ENCODE measurements at regions of chr15 and their contacts with region 1.

Region 1: DNA sequence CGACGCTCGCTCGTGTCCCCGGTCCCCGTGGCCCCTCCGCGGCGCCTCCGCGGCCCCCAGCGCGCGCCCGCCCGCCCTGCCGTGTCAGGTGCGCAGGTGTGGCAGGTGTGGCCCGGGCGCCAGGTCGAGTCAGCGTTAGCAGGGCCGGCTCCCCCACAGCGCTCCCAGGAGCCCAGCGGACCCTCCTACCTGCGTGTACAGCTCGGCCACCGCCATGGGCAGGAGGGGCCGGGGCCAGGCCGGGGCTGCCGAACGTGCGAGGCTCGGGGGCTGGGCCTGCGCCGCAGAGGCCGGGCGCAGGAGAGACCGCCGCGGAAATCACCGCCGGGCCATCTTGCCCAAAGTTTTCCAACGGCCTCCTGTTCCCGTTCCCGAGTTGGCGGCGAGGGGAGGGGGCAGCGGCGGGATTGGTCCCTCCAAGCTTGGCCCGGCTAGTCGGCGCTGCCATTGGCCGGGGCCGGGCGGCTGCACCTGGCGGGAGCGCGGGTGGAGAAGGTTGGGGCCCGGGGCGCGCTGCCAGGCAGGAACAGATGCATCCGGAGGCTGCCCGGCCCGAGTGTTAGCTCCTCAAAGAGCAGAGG is at the start of gene MYO5C:
- DNase-seq: peak; percentile 93
- H3K4me3 Mint-ChIP-seq: peak within 1 kb of the TSS; percentile 69
- H3K27ac Mint-ChIP-seq: peak within 1 kb of the TSS; percentile 54
- H3K4me1 Mint-ChIP-seq: peaks cover 25% of the 10 kb centered on the region
- H3K27me3 Mint-ChIP-seq: no peaks in the 10 kb centered on the region
- CTCF ChIP-seq: no peak
- total RNA-seq, gene MYO5C: 48.1 and 48.4 TPM in 2 replicates

Region 2: DNA sequence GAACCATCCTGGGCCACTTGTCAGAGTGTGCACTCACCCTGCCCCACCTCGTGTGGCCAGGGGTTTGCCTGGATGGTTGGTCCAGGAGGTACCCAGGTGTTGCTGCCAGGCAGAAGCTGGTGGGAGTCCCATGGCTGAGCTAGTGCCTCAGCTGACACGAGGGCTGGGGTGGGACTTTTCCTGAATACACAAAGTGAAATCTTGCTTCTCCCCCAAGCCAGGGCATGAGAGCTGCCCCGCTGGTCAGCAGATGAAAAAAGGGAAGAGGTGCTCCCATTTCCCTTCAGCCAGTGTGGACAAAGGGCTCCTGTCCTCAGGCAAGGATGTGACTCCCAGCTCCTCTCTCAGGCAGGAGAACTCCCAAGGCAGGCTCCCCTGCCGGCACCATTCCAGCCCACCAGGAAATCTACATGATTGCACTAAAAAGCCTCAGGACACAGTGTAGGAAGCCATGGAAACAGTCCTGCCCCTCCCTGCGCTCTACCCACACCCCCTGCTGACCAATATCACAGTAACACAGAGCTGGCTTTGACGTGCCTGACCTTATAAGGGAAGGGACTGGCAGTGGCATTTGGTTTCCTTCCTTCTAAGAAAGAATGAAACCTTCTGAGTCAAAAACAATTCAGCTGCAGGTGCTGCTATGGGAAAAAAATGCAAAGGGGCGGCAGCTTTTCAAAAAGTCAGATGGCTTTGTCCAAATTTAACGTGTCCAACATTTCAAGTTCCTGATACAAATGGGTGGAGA is 33.8 kb before region 1 on chr15:
- CTCF ChIA-PET with region 1: interaction called, 4 read pairs
- intact Hi-C with region 1: loop called (anchors 2 kb)
- DNase-seq: peak; percentile 87
- H3K4me3 Mint-ChIP-seq: peak overlapping the region; percentile 40
- H3K27ac Mint-ChIP-seq: peak overlapping the region; percentile 99
- H3K4me1 Mint-ChIP-seq: peaks cover 28% of the 10 kb centered on the region
- H3K27me3 Mint-ChIP-seq: no peaks in the 10 kb centered on the region
- CTCF ChIP-seq: no peak

Region 3: DNA sequence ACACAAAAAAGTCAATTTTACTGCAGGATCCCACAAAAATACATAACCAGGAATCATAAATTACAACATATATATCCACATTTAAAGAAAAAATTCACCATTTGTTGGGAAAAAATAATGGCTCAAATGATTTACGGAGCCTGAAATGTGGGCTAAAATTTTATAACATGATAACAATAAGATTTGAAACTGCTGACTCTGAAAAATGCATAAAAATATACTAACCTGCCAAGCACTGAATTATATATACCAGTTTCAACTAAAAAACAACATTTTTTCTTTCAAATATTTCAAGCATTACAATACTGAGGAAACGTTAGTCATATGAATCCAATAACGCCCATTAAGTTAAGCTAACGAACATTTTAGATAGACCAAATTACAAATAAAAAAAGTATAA is 12.3 kb after region 1 on chr15:
- CTCF ChIA-PET with region 1: interaction called, 10 read pairs
- intact Hi-C with region 1: no loop called
- DNase-seq: no peak
- H3K4me3 Mint-ChIP-seq: no peak overlapping the region
- H3K27ac Mint-ChIP-seq: no peak overlapping the region
- H3K4me1 Mint-ChIP-seq: no peaks in the 10 kb centered on the region
- H3K27me3 Mint-ChIP-seq: no peaks in the 10 kb centered on the region
- CTCF ChIP-seq: no peak

Measured in Calu3 (cell line).